Activated naive CD4-positive, alpha-beta T cell treated with anti-CD3 and anti-CD28 coated beads for 36 hours (primary cell): ENCODE measurements at regions of chr7 and their contacts with region 1.

Region 1: DNA sequence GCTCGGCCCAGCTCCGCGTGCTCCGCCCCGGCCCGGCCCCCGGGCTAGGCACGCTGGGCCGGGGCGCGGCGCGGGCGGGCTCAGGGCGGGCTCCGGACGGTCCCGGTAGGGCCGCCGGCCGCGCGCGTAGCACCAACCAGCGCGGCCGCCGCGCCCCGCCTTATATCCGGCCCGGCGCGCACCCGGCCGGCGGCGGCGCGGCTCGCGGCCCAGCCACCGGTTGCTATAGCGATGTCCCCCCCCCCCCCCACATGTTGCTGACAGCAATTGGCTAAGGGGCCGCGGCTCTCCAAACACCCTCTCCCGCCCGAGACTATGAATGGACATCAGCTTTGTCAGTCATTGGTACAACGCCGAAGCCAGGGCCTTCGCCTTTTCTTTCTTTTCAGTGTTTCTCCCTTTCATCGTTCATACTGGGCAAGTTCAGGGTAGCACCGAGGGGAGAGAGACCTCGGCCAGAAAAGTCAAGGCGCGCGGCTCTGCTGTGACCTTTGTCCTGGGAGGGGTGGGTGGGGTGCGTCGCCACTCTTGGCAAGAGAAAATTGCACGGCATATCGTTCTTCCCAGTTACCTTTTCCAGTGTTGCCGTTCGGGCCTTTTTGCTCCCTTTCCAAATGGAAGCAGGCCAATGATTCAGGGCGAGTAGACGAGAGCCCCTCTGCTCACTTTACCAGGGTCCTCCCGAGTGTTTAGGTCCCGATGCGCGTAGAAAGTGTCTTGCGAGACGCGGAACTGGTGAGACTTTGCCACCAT is 354.2 kb downstream of the DNAJB6 start:
- DNase-seq: no peak
- H3K4me3 Mint-ChIP-seq: peak overlapping the region; percentile 58
- H3K27ac Mint-ChIP-seq: no peak overlapping the region
- H3K4me1 Mint-ChIP-seq: peaks cover 32% of the 10 kb centered on the region
- H3K27me3 Mint-ChIP-seq: peaks cover 57% of the 10 kb centered on the region

Region 2: GRCh38 chr7:155804897-155805825 is 1885.8 kb before region 1 on chr7:
- CTCF ChIA-PET with region 1: no interaction called
- intact Hi-C with region 1: loop called (anchors 5 kb)
- DNase-seq: peak; percentile 65
- H3K4me3 Mint-ChIP-seq: peak overlapping the region; percentile 17
- H3K27ac Mint-ChIP-seq: no peak overlapping the region
- H3K4me1 Mint-ChIP-seq: peaks cover 25% of the 10 kb centered on the region
- H3K27me3 Mint-ChIP-seq: peaks cover 54% of the 10 kb centered on the region

Region 3: DNA sequence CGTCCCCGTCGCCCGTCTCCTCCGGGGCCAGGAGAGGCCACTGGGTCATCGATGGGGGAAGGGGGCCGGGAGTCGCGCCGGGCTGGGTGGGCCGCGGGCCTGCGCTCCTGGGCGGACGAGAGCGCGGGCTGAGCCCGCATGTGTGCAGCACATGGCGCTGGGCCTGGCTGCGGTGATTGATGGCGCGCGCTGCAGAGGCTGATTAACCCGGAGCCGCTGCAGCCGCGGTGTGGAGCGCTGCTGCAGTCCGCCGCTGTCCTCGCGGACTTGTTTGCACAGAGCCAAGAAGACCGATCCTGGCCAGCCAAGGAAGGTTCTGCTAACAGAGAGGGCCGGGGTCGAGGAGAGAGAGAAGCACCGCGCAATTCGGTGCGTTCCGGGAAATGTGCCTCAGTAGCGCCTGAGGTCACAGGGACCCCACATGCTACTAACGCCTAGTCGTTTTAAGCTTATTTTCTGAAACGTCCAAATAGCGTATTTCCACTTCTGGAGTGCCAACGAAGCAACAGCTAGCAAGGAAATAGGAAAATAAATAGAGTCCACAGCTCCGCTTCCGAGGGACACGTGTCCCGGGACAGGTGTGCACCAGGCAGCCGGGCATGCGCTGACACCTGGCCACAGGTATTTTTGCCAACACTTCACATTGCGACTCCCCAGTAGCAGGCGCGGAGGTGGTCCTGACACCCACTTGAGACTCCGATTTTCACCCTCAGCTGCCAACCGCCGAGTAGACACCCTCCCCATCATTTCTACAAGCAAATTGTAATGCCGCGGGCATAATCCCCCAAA is 686.8 kb before region 1 on chr7:
- CTCF ChIA-PET with region 1: no interaction called
- intact Hi-C with region 1: loop called (anchors 5 kb)
- DNase-seq: no peak
- H3K4me3 Mint-ChIP-seq: no peak overlapping the region
- H3K27ac Mint-ChIP-seq: no peak overlapping the region
- H3K4me1 Mint-ChIP-seq: peaks cover 28% of the 10 kb centered on the region
- H3K27me3 Mint-ChIP-seq: peaks cover 74% of the 10 kb centered on the region

Region 4: DNA sequence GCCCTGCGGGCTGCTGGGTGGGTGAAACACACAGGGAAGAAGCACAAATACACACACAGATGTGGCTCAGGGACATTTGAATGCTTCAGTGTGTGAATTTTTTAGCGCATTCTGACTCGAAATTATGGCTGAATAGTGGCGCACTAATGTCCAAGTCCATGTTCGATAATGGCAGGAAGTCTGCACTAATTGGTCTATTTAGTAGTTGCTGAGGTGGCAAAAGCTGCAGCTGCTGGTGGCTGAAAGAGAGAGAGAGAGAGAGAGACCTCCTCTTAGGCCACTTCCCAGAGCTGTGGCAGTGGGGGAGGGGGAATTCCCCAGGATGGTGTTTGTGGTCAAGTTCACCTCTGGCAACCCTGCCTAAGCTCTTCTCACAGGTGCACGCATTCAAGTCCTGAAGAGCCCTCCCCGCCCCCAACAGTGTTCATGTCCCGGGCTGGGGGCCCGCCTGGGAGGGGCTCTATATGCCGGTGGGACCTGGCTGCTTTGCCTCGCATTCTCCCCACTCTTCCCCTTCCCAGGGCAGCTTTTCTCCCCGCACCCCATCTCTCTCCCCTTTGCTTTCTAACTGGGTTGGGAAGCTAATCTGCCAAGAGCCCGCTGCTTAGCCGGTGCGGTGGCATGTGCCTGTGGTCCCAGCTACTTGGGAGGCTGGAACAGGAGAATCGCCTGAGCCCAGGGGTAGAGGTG is 674.5 kb before region 1 on chr7:
- CTCF ChIA-PET with region 1: no interaction called
- intact Hi-C with region 1: loop called (anchors 5 kb)
- DNase-seq: peak; percentile 77
- H3K4me3 Mint-ChIP-seq: no peak overlapping the region
- H3K27ac Mint-ChIP-seq: no peak overlapping the region
- H3K4me1 Mint-ChIP-seq: peaks cover 25% of the 10 kb centered on the region
- H3K27me3 Mint-ChIP-seq: peaks cover 75% of the 10 kb centered on the region

Region 5: GRCh38 chr7:157520249-157520648 is 170.8 kb before region 1 on chr7:
- CTCF ChIA-PET with region 1: no interaction called
- intact Hi-C with region 1: no loop called
- DNase-seq: no peak
- H3K4me3 Mint-ChIP-seq: no peak overlapping the region
- H3K27ac Mint-ChIP-seq: no peak overlapping the region
- H3K4me1 Mint-ChIP-seq: no peaks in the 10 kb centered on the region
- H3K27me3 Mint-ChIP-seq: no peaks in the 10 kb centered on the region

Region 6: DNA sequence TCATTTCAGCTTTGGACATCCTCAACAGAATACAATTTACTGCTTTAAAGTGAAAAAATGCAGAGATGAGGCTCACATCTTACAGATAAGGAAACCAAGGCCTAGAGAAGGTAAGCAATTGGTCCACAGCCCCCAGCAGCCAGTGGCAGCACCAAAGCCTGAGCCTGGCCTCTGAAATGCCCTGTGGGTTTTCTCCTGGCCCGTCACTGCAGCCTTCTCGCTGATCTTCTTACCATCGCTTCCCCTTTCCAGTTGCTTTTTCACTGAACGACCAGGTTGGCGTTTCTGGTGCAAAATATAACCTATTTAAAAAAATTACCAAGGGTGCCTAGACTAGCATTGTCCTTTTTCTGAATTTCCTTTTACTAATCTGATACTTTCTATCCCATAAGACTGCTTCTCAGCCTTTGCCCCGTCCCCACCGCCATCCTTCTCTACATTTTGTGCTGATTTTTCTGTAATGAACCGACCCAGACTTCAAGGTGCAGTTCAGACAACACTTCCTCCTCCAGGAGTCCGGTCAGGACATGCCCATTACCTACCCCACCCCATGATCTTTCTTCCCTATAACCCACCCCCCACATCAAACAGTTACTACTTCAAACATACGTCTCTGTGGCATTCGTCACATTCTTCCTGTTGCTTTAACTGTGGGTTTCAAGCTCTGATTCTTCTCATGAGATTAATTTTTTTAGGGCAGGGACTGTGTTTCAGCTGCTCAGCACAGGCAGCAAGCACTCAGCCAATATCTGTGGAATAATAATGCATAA is 64.9 kb before region 1 on chr7:
- CTCF ChIA-PET with region 1: no interaction called
- intact Hi-C with region 1: loop called (anchors 5 kb)
- DNase-seq: no peak
- H3K4me3 Mint-ChIP-seq: peak overlapping the region; percentile 19
- H3K27ac Mint-ChIP-seq: peak overlapping the region; percentile 77
- H3K4me1 Mint-ChIP-seq: peaks cover 80% of the 10 kb centered on the region
- H3K27me3 Mint-ChIP-seq: no peaks in the 10 kb centered on the region

Region 7: GRCh38 chr7:157875230-157876179 is 184.5 kb after region 1 on chr7:
- CTCF ChIA-PET with region 1: no interaction called
- intact Hi-C with region 1: loop called (anchors 10 kb)
- DNase-seq: peak; percentile 68
- H3K4me3 Mint-ChIP-seq: peak overlapping the region; percentile 60
- H3K27ac Mint-ChIP-seq: peak overlapping the region; percentile 21
- H3K4me1 Mint-ChIP-seq: peaks cover 41% of the 10 kb centered on the region
- H3K27me3 Mint-ChIP-seq: no peaks in the 10 kb centered on the region